ENCODE measurements at regions of chr14 and their contacts with region 1.

Region 1: DNA sequence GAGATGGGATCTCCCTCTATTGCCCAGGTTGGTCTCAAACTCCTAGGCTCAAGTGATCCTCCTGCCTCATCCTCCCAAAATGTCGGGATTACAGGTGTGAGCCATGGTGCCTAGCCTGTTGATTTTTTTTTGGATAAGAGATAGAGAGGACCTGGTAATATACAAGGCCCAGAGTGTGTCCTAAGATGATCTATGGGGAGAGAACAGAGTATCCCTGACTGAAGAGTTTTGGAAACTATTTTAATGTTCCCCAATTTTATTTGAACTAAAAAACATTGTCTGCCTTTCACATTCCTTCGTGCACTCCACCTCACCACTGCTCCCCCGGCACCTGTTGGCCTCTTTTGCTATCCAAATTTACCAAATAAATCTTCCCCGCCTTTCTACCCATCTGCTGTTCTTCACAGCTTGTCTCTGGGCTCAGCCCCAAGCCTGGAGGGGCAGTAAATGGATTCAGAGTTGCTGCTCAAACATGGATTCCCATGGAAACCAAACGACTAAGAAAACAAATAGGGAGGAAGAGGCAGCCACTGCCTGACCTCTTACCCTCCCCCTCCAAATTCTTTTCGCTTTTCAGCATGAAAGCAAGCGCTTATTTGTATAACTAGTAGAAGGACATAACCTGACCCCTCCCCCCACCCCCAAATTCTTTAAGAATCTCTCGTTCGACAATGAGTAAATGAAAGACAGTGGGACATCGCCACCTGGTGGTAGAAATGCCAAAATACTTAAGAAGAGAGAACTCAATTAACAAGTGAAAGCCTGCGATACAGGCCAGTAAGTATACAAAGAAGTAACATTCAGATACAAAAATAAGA is 22.6 kb downstream of the OR10G3 start:
- DNase-seq: peak; percentile 64
- ATAC-seq: peak; percentile 73
- H3K4me3 ChIP-seq: peak overlapping the region; percentile 4 to 33; a peak in 3 of 4 replicates
- H3K27ac ChIP-seq: no peak overlapping the region
- H3K4me1 ChIP-seq: no peaks in the 10 kb centered on the region
- H3K27me3 ChIP-seq: no peaks in the 10 kb centered on the region
- CTCF ChIP-seq: peak; percentile 71

Region 2: DNA sequence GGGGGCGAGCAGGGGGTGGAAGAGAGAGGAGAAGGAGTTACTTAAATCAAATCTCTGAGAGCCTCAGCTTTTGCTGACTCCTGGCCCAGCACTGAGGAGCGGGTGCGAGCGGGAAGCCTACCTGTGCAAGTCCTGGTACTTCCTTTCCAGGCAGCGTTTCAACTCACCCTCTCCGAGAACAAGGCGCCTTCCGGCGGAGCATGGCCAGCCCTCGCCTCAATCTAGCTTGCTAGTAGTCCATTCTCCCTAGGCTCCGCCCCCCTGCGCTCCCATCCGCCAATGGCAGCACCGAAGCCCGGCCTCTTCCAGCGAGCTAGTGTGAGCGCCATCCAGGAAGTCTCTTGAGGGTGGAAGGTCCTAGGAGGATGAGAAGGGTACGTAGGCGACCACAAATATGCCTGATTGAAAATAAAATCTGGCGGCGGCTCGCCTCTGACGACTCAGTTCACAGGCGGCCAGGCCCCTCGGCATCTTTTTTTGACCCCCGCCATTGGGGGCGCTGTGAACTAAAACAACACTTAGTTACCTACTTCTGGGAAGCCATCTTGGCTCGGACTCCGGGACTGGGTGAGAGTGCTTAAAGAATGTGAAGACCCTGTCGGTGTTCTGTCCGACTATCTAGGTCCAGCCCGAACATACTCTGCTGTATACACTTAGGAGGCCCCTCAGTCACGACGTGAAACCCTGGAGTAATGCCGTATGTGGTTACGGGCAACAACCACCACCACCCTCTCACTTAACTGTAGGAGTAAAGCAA is 101.2 kb before region 1 on chr14 and contains the start of gene CHD8:
- CTCF ChIA-PET with region 1: interaction called, 11 read pairs
- POLR2A ChIA-PET with region 1: no interaction called
- in situ Hi-C with region 1: no loop called
- intact Hi-C with region 1: no loop called
- DNase-seq: peak; percentile 96
- ATAC-seq: peak; percentile 99
- H3K4me3 ChIP-seq: peak within 1 kb of the TSS; percentile 77 to 96
- H3K27ac ChIP-seq: peak within 1 kb of the TSS; percentile 98
- H3K4me1 ChIP-seq: peaks cover 4% of the 10 kb centered on the region; the same call in 1 of the 2 replicates
- H3K27me3 ChIP-seq: no peaks in the 10 kb centered on the region
- CTCF ChIP-seq: peak; percentile 78
- total RNA-seq, gene CHD8: 64.7 TPM

Region 3: DNA sequence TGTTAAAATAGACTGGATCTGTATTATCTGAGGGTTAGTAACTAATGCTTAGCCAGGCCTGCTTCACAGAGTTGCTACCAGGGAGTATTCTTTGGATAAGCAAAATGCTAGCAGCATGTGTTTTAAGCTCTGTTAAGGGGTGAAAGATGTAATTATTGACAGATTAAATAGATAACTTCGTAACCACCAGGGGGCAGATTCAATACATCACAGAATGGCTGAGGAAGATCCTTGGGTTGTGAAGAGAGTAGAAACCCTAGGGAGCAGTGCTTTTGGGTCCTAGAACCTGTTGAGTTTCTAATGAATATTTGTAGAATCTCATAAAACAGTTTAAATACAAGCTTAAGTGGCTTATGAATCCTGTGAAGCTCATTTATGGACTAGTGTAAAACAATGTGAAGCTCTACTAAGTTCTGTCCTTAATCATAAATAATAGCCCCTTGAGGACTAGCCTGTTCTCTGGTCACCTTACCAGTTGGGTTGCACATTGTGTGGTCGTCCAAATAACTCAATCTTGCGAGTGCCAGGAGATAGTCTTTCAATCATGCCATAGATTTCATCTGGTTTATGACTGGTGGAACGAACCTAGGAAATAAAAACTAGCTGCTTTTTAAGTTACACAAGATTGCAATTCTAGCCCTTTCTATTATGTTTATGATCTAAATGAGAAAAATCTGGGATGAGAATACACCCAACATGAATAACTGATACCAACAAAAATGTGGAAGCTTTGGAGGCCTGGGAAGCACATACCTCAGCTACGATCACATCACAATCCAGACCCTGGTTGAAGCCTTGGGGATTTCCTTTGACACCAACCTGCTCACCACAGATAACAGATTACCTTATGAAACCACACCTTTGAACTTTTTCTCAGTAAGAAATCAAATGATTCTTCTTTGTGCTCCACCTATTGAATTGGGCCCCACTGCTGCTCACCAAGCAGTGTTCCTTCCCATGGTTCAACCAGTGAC is 58.5 kb before region 1 on chr14:
- CTCF ChIA-PET with region 1: interaction called, 9 read pairs
- POLR2A ChIA-PET with region 1: no interaction called
- in situ Hi-C with region 1: no loop called
- intact Hi-C with region 1: loop called (anchors 5 kb)
- DNase-seq: no peak
- ATAC-seq: peak; percentile 61; the same call in 1 of the 2 replicates
- H3K4me3 ChIP-seq: no peak overlapping the region
- H3K27ac ChIP-seq: no peak overlapping the region
- H3K4me1 ChIP-seq: no peaks in the 10 kb centered on the region
- H3K27me3 ChIP-seq: no peaks in the 10 kb centered on the region
- CTCF ChIP-seq: peak; percentile 25; the same call in 1 of the 2 replicates

Region 4: GRCh38 chr14:21541413-21542074 is 15.7 kb before region 1 on chr14:
- CTCF ChIA-PET with region 1: no interaction called
- POLR2A ChIA-PET with region 1: interaction called, 14 read pairs
- in situ Hi-C with region 1: no loop called
- intact Hi-C with region 1: no loop called
- DNase-seq: no peak
- ATAC-seq: no peak
- H3K4me3 ChIP-seq: no peak overlapping the region
- H3K27ac ChIP-seq: no peak overlapping the region
- H3K4me1 ChIP-seq: peaks cover 3% of the 10 kb centered on the region; the same call in 1 of the 2 replicates
- H3K27me3 ChIP-seq: no peaks in the 10 kb centered on the region; the same call in none of the 2 replicates
- CTCF ChIP-seq: no peak

Measured in Panc1 (cell line).